ENCODE measurements at regions of chr4 and their contacts with region 1.

Region 1: DNA sequence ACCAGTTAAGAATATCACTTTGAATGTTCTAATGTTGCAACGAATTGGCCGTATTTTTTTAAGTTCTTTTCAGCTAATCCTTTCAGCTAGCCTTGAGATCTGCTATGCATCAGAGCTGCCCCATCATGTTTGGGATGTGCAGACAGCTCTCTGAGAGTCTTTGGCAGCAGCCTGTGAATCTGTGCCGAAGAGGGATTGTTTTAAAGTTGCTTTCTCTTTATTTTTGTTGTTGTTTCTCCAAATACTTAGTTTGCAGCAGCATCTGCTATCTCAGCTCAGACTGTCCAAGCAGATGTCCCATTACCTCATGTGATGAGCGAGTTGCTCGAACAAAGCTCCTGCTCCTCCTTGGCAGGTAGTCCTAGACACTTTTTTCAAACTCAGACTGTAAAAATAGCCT is 1002.5 kb upstream of the INTU start:
- DNase-seq: no peak
- ATAC-seq: peak; percentile 80

Region 2: GRCh38 chr4:126969360-126970235 is 339.4 kb after region 1 on chr4:
- intact Hi-C with region 1: loop called (anchors 10 kb)
- DNase-seq: no peak
- ATAC-seq: no peak

Measured in Right ventricle myocardium inferior (tissue), 1 donor.